AG04450 (cell line): ENCODE measurements at regions of chr7 and their contacts with region 1.

Region 1: DNA sequence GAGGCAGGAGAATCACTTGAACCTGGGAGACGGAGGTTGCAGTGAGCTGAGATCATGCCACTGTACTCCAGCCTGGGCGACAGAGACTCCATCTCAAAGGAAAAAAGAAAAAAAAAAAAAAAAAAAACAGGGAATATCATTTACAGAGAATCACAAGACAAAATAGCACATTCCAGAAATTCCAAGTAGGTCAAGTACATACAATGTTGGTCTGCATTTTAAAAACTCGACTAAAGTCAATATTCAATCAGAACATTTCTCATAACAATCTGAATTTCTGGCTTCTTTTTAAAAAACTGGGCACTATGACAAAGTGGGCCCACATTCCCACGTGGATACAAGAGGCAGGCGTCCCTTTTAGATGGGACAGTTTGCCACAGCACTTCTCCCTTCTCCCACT is 12.8 kb downstream of the ZC3HAV1L start:
- DNase-seq: no peak
- H3K4me3 ChIP-seq: no peak overlapping the region
- H3K27ac ChIP-seq: no peak overlapping the region
- H3K27me3 ChIP-seq: no peaks in the 10 kb centered on the region
- CTCF ChIP-seq: no peak

Region 2: GRCh38 chr7:139058943-139059342 is 35.9 kb after region 1 on chr7:
- CTCF ChIA-PET with region 1: interaction called, 18 read pairs
- POLR2A ChIA-PET with region 1: no interaction called
- DNase-seq: no peak
- H3K4me3 ChIP-seq: no peak overlapping the region
- H3K27ac ChIP-seq: no peak overlapping the region
- H3K27me3 ChIP-seq: no peaks in the 10 kb centered on the region
- CTCF ChIP-seq: no peak